HAP-1 (cell line): ENCODE measurements at regions of chr14 and their contacts with region 1.

Region 1: GRCh38 chr14:70821584-70822529 is 12.5 kb upstream of the MAP3K9 start:
- DNase-seq: peak; percentile 54 to 72
- H3K4me3 ChIP-seq: peak overlapping the region; percentile 58
- H3K4me1 ChIP-seq: peaks cover 10% of the 10 kb centered on the region
- H3K27me3 ChIP-seq: no peaks in the 10 kb centered on the region

Region 2: GRCh38 chr14:70595443-70596185 is 226.2 kb before region 1 on chr14:
- in situ Hi-C with region 1: no loop called
- DNase-seq: no peak
- H3K4me3 ChIP-seq: no peak overlapping the region
- H3K4me1 ChIP-seq: peaks cover 7% of the 10 kb centered on the region
- H3K27me3 ChIP-seq: no peaks in the 10 kb centered on the region

Region 3: DNA sequence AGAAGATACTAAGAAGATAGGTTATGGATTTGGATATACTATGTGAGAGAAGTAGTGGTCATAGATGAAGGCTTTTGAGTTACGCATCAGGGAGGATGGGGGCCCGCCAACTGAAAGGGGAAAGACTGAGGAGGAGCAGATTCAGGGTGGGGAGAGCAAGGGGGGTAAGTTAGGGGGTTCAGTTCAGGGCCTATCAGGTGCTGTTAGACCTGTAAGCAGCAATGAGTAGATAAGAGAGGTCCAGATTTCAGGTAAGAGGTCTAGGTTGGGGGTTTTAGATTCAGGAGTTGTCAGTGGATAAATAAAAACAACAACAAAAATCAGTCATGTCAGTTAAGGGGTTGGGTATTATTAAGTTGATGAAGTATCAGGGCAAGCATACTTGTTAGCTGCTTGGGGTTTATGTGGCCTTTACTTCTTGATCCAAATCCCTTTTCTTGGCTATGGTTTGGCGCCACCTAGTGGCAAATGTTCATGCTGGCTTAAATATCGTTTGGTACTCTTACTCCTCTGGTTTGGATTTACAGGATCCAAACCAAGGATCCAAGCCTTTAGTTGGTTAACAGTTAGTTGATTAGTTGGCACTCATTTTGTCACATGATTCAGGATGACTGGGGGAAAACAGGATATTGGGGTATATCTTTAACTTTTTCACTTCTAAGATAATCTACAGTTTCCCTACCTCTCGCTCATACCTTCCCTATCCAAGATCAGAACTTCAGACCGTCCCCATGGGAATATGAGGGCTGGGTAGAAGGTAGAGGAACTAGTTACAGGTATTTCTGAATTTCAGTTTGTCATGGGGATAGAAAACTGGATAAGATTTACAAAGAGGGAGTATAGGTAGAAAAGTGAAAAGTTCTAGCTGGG is 150.5 kb after region 1 on chr14:
- in situ Hi-C with region 1: loop called (anchors 5 kb)
- DNase-seq: peak; percentile 69 to 87
- H3K4me3 ChIP-seq: no peak overlapping the region
- H3K4me1 ChIP-seq: no peaks in the 10 kb centered on the region
- H3K27me3 ChIP-seq: no peaks in the 10 kb centered on the region